Ovary (tissue), 10 donors: ENCODE measurements at regions of chr4 and their contacts with region 1.

Region 1: DNA sequence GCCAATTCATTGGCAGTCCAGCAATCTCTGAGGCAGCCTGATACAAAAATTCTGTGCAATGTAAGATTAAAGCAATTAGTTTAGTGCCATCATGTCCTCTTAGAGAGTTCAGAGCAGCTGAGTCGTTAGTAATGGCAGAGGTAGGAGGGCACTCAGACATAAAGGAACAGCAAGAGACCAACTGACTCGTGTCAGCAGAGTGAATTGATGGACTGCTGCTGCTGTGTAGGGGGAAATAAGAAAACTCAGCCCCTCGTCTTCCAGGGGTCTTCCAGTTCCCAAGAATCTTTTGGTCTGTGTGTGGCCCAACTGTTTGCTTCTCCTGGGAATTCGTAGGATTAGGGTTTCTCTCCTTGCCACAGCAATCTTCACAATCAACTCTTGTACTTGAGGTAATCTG is 100.9 kb downstream of the TTC29 start:
- DNase-seq: no peak
- H3K4me3 ChIP-seq: no peak overlapping the region
- H3K27ac ChIP-seq: no peak overlapping the region
- H3K4me1 ChIP-seq: no peaks in the 10 kb centered on the region
- H3K27me3 ChIP-seq: no peaks in the 10 kb centered on the region
- CTCF ChIP-seq: no peak
- EP300 ChIP-seq: no peak
- POLR2A ChIP-seq: no peak

Region 2: GRCh38 chr4:147539959-147540358 is 695.2 kb after region 1 on chr4:
- intact Hi-C with region 1: loop called in 1 of 4 experiments (anchors 5 kb)
- DNase-seq: no peak
- H3K4me3 ChIP-seq: no peak overlapping the region
- H3K27ac ChIP-seq: no peak overlapping the region
- H3K4me1 ChIP-seq: no peaks in the 10 kb centered on the region
- H3K27me3 ChIP-seq: no peaks in the 10 kb centered on the region
- CTCF ChIP-seq: no peak
- EP300 ChIP-seq: no peak
- POLR2A ChIP-seq: no peak